ENCODE measurements at regions of chr6 and their contacts with region 1.

Region 1: DNA sequence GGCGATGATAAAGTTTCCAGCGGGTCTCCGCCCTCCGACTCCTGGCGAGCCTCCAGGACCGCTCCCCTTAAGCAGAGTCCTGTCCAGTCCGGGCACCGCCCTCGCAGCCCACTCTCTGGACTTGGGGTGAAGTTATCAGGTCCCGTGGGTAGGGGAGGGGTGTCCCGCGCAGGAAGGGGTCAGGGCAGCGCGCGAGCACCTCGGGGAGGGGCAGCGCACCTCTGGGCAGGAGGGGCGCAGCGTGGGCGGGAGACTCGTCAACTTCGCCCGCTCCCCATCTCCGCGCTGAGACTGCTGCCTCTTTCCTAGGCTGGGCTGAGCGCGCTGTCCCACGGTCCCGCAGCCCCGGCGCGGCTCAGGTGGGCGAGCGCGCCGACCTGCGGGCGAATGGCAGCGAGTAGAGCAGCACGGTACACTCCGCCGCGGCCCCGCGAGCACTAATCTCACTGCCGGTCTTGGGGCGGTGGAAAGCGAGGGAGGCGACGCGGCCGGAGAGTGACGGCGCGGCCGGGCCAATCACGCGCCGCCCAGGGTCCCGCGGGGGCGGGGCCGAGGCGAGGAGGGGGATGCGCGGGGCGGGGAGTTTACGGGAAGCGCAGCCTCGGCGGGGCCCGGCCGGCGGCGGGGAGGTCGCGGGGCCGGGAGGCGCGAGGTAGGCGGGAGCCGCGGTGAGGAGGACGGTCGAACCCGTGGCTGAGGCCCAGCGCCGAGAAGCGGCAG is at the start of gene MAN1A1:
- DNase-seq: peak; percentile 98
- H3K4me3 Mint-ChIP-seq: peak within 1 kb of the TSS; percentile 97
- H3K27ac Mint-ChIP-seq: peak within 1 kb of the TSS; percentile 94
- H3K4me1 Mint-ChIP-seq: peaks cover 49% of the 10 kb centered on the region
- H3K27me3 Mint-ChIP-seq: no peaks in the 10 kb centered on the region
- total RNA-seq, gene MAN1A1: 43.0 and 43.7 TPM in 2 replicates

Region 2: DNA sequence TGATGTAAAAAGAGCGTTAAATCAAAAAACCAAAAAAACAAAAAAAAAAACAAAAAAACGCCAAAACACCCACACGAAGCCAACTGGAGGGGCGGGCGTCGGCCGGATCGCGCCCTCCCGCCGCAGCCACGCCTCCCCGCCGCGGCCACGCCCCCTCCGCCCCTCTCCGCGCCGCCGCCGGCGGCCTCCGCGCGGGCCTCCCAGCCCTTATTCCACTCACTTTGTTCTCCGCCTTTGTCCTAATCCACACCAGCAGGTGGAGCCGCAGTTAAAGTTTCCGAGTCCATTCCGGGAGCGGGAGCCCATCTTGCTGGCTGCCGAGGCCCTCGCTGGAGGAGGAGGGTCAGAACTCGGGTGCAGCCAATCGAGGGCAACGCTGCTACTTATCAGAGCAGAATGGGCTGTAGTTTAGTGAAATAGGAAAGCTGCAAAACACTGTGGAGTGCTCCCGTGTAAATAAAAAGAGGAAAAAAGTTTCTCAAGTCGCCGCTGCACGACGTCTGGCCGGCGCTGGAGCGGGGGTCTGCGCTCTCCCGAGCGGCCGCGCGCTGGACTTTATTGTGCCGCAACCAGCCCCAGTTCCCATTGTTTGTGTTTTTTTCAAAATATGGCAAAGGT is 455.6 kb before region 1 on chr6 and contains the start of gene ASF1A:
- intact Hi-C with region 1: loop called (anchors 1 kb)
- DNase-seq: peak; percentile 99
- H3K4me3 Mint-ChIP-seq: peak within 1 kb of the TSS; percentile 90
- H3K27ac Mint-ChIP-seq: peak within 1 kb of the TSS; percentile 95
- H3K4me1 Mint-ChIP-seq: peaks cover 43% of the 10 kb centered on the region
- H3K27me3 Mint-ChIP-seq: no peaks in the 10 kb centered on the region
- total RNA-seq, gene ASF1A: 43.2 and 43.3 TPM in 2 replicates

Region 3: GRCh38 chr6:119129148-119129967 is 220.1 kb before region 1 on chr6:
- intact Hi-C with region 1: loop called (anchors 1 kb)
- DNase-seq: peak; percentile 83
- H3K4me3 Mint-ChIP-seq: no peak overlapping the region
- H3K27ac Mint-ChIP-seq: peak overlapping the region; percentile 38
- H3K4me1 Mint-ChIP-seq: peaks cover 12% of the 10 kb centered on the region
- H3K27me3 Mint-ChIP-seq: peaks cover 5% of the 10 kb centered on the region

Region 4: GRCh38 chr6:119313937-119314884 is 35.3 kb before region 1 on chr6:
- intact Hi-C with region 1: loop called (anchors 1 kb)
- DNase-seq: peak; percentile 83
- H3K4me3 Mint-ChIP-seq: peak overlapping the region; percentile 81
- H3K27ac Mint-ChIP-seq: peak overlapping the region; percentile 98
- H3K4me1 Mint-ChIP-seq: peaks cover 71% of the 10 kb centered on the region
- H3K27me3 Mint-ChIP-seq: no peaks in the 10 kb centered on the region

Region 5: DNA sequence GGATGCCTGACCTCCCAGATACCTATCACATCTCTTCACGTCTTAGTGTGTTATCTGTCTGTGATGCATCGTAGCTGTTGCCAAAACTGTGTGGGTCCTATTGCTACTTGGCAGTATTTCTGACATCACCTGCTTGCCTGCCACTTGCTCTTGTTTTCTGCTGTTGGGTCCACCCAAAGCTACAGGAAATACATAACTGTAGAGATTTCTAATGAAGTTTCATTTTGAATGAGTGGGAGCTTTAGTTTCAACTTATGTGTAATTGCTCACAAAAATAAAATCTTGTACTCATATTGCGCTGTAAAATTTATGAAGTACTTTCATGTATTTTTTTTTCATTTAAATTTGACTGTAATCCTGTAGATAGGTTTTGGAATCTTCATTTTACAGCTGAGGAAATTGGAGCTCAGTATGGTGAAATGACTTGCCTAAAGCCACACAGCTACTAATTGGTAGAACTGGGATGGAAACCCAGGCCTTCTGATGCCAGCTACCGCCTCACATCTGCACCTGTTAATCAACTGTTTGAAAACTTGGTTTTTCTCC is 113.7 kb after region 1 on chr6:
- intact Hi-C with region 1: loop called (anchors 1 kb)
- DNase-seq: peak; percentile 77
- H3K4me3 Mint-ChIP-seq: peak overlapping the region; percentile 9
- H3K27ac Mint-ChIP-seq: peak overlapping the region; percentile 89
- H3K4me1 Mint-ChIP-seq: peaks cover 48% of the 10 kb centered on the region
- H3K27me3 Mint-ChIP-seq: no peaks in the 10 kb centered on the region

Region 6: DNA sequence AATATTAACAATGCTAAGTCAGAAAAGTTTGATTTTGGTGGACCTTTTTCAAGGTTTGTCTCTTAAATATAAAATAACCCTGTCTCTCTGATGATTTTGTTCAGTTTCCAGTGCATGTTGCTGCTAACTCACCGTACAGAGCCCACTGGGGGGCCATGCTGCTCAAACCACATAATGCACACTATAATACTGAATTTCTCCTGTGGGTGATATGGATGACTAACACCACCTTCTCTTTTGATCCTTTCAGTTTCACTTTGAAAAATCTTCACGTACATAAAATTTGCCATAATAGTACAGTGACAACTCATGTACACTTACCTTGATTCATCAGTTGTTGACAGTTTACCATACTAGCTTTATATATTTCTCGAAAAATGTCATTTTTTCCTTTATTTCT is 506.7 kb after region 1 on chr6:
- intact Hi-C with region 1: loop called (anchors 10 kb)
- DNase-seq: peak; percentile 66
- H3K4me3 Mint-ChIP-seq: peak overlapping the region; percentile 32
- H3K27ac Mint-ChIP-seq: no peak overlapping the region
- H3K4me1 Mint-ChIP-seq: peaks cover 11% of the 10 kb centered on the region
- H3K27me3 Mint-ChIP-seq: peaks cover 7% of the 10 kb centered on the region